ENCODE measurements at regions of chr6 and their contacts with region 1.

Region 1: GRCh38 chr6:26234421-26235296 is 130.3 kb upstream of the BTN3A2 start:
- DNase-seq: no peak
- H3K4me3 ChIP-seq: peak overlapping the region; percentile 60
- CTCF ChIP-seq: no peak

Region 2: GRCh38 chr6:26223650-26224546 is 10.8 kb before region 1 on chr6:
- CTCF ChIA-PET with region 1: interaction called, 22 read pairs
- POLR2A ChIA-PET with region 1: interaction called, 24 read pairs
- DNase-seq: no peak
- H3K4me3 ChIP-seq: peak overlapping the region; percentile 69
- CTCF ChIP-seq: no peak

Region 3: GRCh38 chr6:26249957-26250697 is 15.5 kb after region 1 on chr6:
- CTCF ChIA-PET with region 1: interaction called, 20 read pairs
- POLR2A ChIA-PET with region 1: interaction called, 25 read pairs
- DNase-seq: no peak
- H3K4me3 ChIP-seq: peak overlapping the region; percentile 68
- CTCF ChIP-seq: peak; percentile 45

Measured in AG04449 (cell line).